GM10248 (cell line): ENCODE measurements at regions of chr10 and their contacts with region 1.

Region 1: DNA sequence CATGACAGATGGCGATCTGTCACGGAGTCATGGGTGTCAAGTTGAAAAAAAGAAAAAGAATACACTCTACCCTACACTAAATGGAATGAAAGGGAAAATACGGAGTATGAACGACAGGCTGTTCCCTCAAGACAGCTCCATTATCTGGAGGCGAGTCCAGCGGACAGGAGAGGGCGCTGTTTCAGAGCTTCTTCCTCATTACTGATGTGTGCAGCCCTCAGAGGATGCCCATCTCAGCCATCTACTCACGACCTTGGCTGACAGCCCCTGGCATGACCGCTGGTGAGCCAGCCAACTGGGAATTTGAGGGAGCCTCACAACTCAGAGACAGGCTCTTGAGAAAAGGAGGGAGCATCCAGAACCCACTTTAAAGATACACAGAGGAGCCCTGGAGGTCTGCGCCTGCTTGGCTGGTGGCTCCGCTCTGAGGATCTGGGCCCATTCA is 49.6 kb upstream of the SMNDC1 start:
- DNase-seq: peak; percentile 66
- CTCF ChIP-seq: peak; percentile 78

Region 2: GRCh38 chr10:110252151-110252550 is 102.2 kb before region 1 on chr10:
- CTCF ChIA-PET with region 1: no interaction called
- POLR2A ChIA-PET with region 1: no interaction called
- DNase-seq: no peak
- CTCF ChIP-seq: no peak

Region 3: GRCh38 chr10:110336111-110336721 is 18.1 kb before region 1 on chr10:
- CTCF ChIA-PET with region 1: interaction called, 44 read pairs
- POLR2A ChIA-PET with region 1: no interaction called
- DNase-seq: no peak
- CTCF ChIP-seq: no peak

Region 4: GRCh38 chr10:110395725-110396651 is 41.6 kb after region 1 on chr10:
- CTCF ChIA-PET with region 1: interaction called, 14 read pairs
- POLR2A ChIA-PET with region 1: interaction called, 5 read pairs
- DNase-seq: peak; percentile 79
- CTCF ChIP-seq: no peak

Region 5: DNA sequence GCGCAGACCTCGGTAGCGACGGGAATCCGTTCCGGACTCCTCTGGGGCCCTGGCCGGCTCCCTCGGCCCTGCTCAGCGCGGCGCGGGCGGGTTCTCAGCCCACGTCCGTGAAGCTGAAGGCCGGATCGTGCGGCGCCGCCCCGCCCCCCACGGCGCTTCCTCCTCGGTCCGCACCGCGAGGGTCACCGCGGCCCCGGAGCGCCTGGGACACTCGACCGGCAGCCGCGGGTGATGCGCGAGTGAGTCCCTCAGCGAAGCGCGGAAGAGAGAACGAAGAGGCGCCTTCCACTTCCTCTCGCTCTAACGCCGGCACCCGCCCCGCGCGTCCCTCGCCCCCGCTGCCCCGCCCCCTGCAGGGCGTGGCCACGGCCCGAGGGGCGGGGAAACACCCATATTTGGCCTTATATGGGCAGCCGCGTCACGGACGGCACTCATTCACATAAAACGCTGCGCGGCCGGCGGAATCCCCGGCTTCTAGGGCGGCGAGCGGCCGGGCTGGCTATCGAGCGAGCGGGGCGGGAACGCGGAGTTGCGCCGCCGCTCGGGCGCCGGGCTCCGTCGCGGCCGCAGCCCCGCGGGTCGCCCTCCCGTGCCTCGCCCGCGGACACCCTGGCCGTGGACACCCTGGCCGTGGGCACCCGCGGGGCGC is 143.2 kb after region 1 on chr10 and contains the start of gene DUSP5:
- CTCF ChIA-PET with region 1: interaction called, 37 read pairs
- POLR2A ChIA-PET with region 1: interaction called, 9 read pairs
- DNase-seq: peak; percentile 96
- CTCF ChIP-seq: no peak

Region 6: DNA sequence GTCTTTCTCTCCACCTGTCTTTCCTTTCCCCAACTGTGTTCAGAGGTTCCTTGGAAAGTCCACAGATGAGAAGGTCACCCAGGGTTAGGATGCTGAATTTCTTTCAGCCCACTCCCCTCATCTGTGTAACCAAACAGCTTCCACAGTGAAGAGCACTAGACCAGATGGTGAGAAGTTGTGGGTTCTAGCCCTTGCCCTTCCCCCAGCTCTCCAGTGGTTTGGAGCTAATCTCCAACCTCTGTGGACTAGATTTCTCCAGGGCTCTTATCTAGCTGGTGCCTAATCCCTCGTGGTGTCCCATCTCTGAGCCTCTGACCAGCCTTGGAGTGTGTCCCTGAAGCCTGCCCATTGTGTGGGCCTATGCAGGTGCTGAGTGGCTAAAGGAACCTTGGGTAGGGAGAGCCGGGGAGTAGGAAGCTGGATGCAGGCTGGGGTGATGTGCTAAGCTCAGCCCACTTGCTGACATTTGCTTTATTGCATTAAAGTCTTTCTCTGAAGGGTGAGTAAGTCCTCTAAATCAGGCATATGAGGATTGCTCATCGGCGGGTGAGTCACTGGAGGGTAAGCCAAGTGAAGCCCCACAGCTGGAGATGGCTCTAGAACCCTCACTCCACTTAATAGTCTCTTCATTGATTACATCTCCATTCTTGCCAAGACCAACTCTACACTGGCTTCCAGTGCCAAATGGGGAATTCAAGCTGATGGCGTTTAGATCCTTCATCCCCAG is 158.3 kb after region 1 on chr10:
- CTCF ChIA-PET with region 1: interaction called, 13 read pairs
- POLR2A ChIA-PET with region 1: interaction called, 3 read pairs
- DNase-seq: no peak
- CTCF ChIP-seq: no peak